ENCODE measurements at regions of chr6 and their contacts with region 1.

Region 1: GRCh38 chr6:72084992-72085569 is 198.7 kb downstream of the RIMS1 start:
- DNase-seq: no peak

Region 2: DNA sequence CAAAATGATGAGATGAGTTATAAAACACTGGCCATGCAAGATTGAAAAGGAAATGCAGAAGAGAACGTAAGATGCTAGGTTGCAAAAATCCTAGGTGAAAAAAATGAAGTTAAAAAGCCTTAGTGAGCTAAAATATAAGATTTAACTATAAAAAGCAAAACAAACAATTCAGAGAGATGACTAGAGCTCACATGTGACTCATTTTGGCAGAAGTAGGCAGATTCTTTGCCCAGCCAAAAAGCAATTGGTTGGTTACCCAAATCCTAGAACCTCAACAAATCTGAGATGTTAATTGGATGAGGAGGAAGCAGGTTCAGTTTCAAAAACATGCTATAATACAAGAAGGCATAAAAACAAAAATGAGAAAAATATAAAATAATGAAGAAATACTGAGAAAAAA is 547.4 kb before region 1 on chr6:
- intact Hi-C with region 1: loop called (anchors 2 kb)
- DNase-seq: no peak

Region 3: DNA sequence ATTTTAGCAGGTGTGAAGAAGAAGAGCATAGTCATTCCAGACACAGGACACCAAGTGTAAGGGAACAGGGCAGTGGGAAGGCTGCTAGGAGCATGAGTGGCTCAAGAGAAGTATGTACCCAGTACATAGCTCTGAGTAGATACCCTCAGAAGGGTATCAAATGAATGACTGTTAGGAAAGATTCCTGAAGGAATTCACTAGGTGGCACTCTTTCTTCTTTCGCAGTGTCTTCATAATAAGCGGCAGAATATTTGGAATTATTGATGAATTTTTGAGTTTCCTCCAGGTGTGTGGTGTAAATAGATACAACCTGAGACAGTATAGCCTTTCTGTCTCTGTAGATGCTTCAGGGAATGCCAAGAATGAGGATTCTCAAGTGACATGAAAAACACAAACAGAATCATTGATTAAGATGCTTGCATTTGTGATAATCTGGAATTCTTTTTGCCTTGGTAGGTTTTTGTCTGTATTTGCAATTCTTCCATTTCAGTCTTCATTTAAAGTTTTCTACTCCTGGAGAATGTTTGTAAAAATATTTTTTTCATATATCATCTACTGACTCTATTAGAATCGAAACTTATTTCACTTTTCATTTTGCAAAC is 463.1 kb before region 1 on chr6:
- intact Hi-C with region 1: loop called (anchors 10 kb)
- DNase-seq: no peak

Measured in cardiac septum (tissue), 1 donor.